A673 (cell line): ENCODE measurements at regions of chr20 and their contacts with region 1.

Region 1: DNA sequence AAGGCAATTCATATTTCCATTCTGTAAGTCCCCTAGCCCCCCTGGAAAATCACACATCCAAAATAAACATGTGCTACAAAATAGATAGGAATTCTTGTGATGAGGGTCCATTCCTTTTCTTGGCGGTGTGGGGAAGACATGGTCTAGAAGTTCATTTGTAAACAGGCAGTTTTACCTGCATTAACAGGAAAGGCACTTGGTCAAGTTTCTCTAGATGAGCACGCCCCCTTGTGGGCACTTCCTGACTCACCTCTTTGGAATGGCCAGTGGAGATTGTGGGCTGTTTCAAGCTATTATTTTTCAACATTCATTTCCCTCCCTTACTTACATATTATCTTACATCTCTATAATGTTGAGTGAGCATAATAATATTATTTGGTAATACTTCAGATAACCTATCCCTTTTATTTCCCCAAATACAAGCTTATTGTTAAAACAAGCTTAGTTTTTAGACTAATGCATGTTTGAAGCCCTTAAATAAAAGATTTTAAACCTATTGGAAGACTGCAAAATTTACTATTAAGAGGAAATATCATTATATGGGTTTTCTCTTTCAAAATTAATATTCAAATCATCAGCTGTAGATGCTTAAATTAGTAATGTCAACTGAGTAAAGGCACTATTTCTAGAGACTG is 92.1 kb downstream of the TASP1 start:
- DNase-seq: peak; percentile 81
- H3K4me3 ChIP-seq: no peak overlapping the region
- H3K27ac ChIP-seq: no peak overlapping the region
- H3K4me1 ChIP-seq: peaks cover 16% of the 10 kb centered on the region
- H3K27me3 ChIP-seq: no peaks in the 10 kb centered on the region
- CTCF ChIP-seq: peak; percentile 90

Region 2: DNA sequence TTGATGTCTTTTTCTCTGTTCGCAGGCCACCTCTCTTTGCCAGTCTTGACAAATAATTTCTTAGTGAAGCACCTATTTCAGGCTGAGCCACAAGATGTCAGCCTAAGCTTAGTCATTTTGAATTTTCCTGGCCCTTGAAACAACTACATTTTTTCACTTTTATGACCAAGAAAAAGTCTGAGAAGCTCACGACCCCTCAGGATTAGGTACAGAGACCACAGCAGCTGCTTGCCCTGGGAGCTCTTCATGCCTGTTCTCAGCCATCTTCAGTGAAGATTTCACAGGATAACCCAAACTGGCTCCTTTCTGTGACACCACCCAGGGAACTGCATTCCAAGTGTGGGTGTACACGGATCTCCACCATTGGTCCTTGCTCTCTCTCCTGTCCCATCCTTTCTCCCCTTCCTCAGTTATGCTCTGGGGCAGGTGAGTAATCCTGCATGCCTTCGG is 576.2 kb before region 1 on chr20:
- CTCF ChIA-PET with region 1: interaction called, 19 read pairs
- POLR2A ChIA-PET with region 1: no interaction called
- intact Hi-C with region 1: no loop called
- DNase-seq: peak; percentile 50
- H3K4me3 ChIP-seq: no peak overlapping the region
- H3K27ac ChIP-seq: no peak overlapping the region
- H3K4me1 ChIP-seq: no peaks in the 10 kb centered on the region
- H3K27me3 ChIP-seq: no peaks in the 10 kb centered on the region
- CTCF ChIP-seq: peak; percentile 58

Region 3: DNA sequence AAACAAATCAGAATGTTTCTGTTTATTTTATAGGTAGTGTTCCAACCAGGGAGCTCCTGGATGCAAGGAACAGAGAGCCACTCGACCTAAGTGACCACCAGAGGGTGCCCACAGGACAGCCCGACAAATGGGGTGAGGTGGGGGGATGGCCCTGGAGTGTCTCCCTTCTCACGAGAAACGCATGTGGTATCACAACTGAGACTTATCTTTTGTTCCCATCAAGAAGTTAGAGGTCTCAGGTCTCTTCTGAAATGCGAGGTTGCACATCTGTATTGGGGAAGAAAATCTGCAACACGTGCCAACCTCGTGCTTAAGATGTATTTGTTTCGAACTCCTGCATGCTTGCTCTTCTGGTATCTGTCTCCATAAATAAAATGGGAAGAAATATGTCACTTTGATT is 221.6 kb before region 1 on chr20:
- CTCF ChIA-PET with region 1: interaction called, 31 read pairs
- POLR2A ChIA-PET with region 1: no interaction called
- intact Hi-C with region 1: loop called (anchors 1 kb)
- DNase-seq: peak; percentile 67
- H3K4me3 ChIP-seq: no peak overlapping the region
- H3K27ac ChIP-seq: no peak overlapping the region
- H3K4me1 ChIP-seq: no peaks in the 10 kb centered on the region
- H3K27me3 ChIP-seq: no peaks in the 10 kb centered on the region
- CTCF ChIP-seq: peak; percentile 66

Region 4: GRCh38 chr20:13458860-13459451 is 87.7 kb before region 1 on chr20:
- CTCF ChIA-PET with region 1: no interaction called
- POLR2A ChIA-PET with region 1: no interaction called
- intact Hi-C with region 1: loop called (anchors 2 kb)
- DNase-seq: peak; percentile 63
- H3K4me3 ChIP-seq: no peak overlapping the region
- H3K27ac ChIP-seq: no peak overlapping the region
- H3K4me1 ChIP-seq: peaks cover 7% of the 10 kb centered on the region
- H3K27me3 ChIP-seq: no peaks in the 10 kb centered on the region
- CTCF ChIP-seq: peak; percentile 81

Region 5: GRCh38 chr20:13469262-13469661 is 77.4 kb before region 1 on chr20:
- CTCF ChIA-PET with region 1: no interaction called
- POLR2A ChIA-PET with region 1: no interaction called
- intact Hi-C with region 1: no loop called
- DNase-seq: no peak
- H3K4me3 ChIP-seq: no peak overlapping the region
- H3K27ac ChIP-seq: no peak overlapping the region
- H3K4me1 ChIP-seq: no peaks in the 10 kb centered on the region
- H3K27me3 ChIP-seq: no peaks in the 10 kb centered on the region
- CTCF ChIP-seq: no peak